ENCODE measurements at regions of chr4 and their contacts with region 1.

Region 1: DNA sequence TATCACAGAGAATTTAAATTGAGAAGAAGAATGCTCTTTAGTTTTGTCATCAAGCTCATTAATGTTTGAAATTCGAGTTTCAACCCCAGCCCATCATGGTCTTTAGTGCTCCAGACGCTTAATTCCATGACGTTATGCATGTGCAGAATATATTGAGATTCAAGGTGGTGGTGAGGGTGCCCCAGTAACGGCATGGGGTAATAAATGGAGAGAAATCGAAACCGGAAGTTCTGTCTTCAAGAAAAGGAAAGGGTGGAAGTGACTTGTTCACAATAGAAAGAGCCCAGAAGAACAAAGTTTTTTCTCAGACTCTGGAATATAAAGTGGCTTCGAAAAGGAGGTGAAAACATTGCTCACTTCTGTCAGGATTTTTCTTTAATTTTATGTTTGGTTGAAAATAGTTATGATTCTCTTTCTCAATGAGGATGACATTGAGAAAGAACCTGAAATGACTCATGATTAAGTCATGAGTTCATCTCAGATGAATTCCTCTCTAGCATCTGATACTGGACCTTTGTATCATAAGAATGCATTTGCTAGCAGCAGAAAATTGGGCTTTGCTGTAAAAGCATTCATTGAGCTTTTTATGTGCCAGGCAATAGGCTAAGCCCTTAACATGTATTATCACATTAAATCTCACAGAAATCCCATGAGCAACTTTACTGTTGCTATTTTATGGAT is 779 bp upstream of the DDX60L start:
- DNase-seq: peak; percentile 12 to 87 (median 34)
- ATAC-seq: peak; percentile 68
- H3K4me3 ChIP-seq: peak overlapping the region; percentile 84
- H3K4me3 Mint-ChIP-seq: peak overlapping the region; percentile 99
- H3K27ac ChIP-seq: peak overlapping the region; percentile 78 to 86
- H3K27ac Mint-ChIP-seq: peak overlapping the region; percentile 97
- H3K4me1 ChIP-seq: peaks cover 20% of the 10 kb centered on the region
- H3K4me1 Mint-ChIP-seq: peaks cover 78% of the 10 kb centered on the region
- H3K27me3 ChIP-seq: no peaks in the 10 kb centered on the region
- H3K27me3 Mint-ChIP-seq: no peaks in the 10 kb centered on the region
- CTCF ChIP-seq: no peak

Region 2: GRCh38 chr4:168461821-168462220 is 19.2 kb before region 1 on chr4:
- CTCF ChIA-PET with region 1: no interaction called
- POLR2A ChIA-PET with region 1: interaction called, 7 read pairs
- intact Hi-C with region 1: loop called in 1 of 2 experiments (anchors 1 kb)
- DNase-seq: no peak
- ATAC-seq: no peak
- H3K4me3 ChIP-seq: no peak overlapping the region
- H3K4me3 Mint-ChIP-seq: no peak overlapping the region
- H3K27ac ChIP-seq: no peak overlapping the region
- H3K27ac Mint-ChIP-seq: no peak overlapping the region
- H3K4me1 ChIP-seq: no peaks in the 10 kb centered on the region
- H3K4me1 Mint-ChIP-seq: peaks cover 4% of the 10 kb centered on the region
- H3K27me3 ChIP-seq: no peaks in the 10 kb centered on the region
- H3K27me3 Mint-ChIP-seq: no peaks in the 10 kb centered on the region
- CTCF ChIP-seq: no peak

Region 3: DNA sequence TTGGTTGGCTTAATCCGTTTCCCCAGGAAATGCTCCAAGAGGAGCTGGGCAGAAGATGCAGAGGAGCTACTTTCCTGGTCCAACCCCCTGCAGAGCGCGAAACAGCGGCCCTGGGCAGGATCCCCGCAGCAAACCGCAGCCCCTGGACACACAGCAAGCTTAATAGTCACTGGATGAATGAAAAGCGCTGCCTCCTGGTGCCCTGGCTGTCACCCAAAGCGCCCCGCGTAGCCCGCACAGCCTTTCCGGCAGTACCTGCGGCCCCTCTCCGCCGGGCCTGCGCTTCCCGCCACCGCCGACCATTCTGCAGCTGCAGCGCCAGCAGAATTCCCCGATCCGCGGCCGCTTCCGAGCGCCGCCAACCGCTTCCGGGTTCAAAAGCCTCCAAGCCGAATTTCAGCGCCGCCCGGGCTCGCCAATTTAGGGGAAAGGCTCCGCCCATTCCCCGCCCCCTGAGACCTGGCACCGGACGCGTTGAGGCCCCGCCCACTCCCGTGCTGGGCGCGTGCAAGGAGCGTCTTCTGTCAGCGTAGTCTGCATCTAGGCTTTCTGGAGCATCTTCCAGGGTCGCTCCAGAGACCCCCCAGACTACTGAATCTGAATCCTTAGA is 1276.6 kb after region 1 on chr4 and contains the start of gene HPF1:
- CTCF ChIA-PET with region 1: no interaction called
- POLR2A ChIA-PET with region 1: no interaction called
- intact Hi-C with region 1: loop called in 1 of 2 experiments (anchors 10 kb)
- DNase-seq: peak; percentile 83 to 99 (median 92)
- ATAC-seq: peak; percentile 97
- H3K4me3 ChIP-seq: peak within 1 kb of the TSS; percentile 83
- H3K4me3 Mint-ChIP-seq: peak within 1 kb of the TSS; percentile 85
- H3K27ac ChIP-seq: peak within 1 kb of the TSS; percentile 23 to 29
- H3K27ac Mint-ChIP-seq: peak within 1 kb of the TSS; percentile 26
- H3K4me1 ChIP-seq: peaks cover 17% of the 10 kb centered on the region
- H3K4me1 Mint-ChIP-seq: peaks cover 33% of the 10 kb centered on the region
- H3K27me3 ChIP-seq: no peaks in the 10 kb centered on the region
- H3K27me3 Mint-ChIP-seq: no peaks in the 10 kb centered on the region
- CTCF ChIP-seq: no peak
- total RNA-seq, gene HPF1: 4.4 to 4.8 TPM

Measured in CD4-positive, alpha-beta T cell (primary cell).